Ascending aorta (tissue), 2 donors: ENCODE measurements at regions of chr6 and their contacts with region 1.

Region 1: GRCh38 chr6:41787219-41787917 is at the start of gene TOMM6:
- DNase-seq: peak; percentile 73 to 97
- H3K4me3 ChIP-seq: peak within 1 kb of the TSS; percentile 75 to 79
- H3K27ac ChIP-seq: peak within 1 kb of the TSS; percentile 87 to 92
- H3K4me1 ChIP-seq: peaks cover 12 to 13% of the 10 kb centered on the region in 2 donors
- H3K27me3 ChIP-seq: no peaks in the 10 kb centered on the region
- CTCF ChIP-seq: peak; percentile 86 to 91 (median 86)
- total RNA-seq, gene TOMM6: 79.9 TPM

Region 2: GRCh38 chr6:41424370-41425058 is 362.9 kb before region 1 on chr6:
- intact Hi-C with region 1: loop called (anchors 2 kb)
- DNase-seq: peak; percentile 47 to 93
- H3K4me3 ChIP-seq: no peak overlapping the region
- H3K27ac ChIP-seq: no peak overlapping the region
- H3K4me1 ChIP-seq: peaks cover 4 to 27% of the 10 kb centered on the region in 2 donors
- H3K27me3 ChIP-seq: no peaks in the 10 kb centered on the region
- CTCF ChIP-seq: peak; percentile 66 to 91 (median 85)

Region 3: DNA sequence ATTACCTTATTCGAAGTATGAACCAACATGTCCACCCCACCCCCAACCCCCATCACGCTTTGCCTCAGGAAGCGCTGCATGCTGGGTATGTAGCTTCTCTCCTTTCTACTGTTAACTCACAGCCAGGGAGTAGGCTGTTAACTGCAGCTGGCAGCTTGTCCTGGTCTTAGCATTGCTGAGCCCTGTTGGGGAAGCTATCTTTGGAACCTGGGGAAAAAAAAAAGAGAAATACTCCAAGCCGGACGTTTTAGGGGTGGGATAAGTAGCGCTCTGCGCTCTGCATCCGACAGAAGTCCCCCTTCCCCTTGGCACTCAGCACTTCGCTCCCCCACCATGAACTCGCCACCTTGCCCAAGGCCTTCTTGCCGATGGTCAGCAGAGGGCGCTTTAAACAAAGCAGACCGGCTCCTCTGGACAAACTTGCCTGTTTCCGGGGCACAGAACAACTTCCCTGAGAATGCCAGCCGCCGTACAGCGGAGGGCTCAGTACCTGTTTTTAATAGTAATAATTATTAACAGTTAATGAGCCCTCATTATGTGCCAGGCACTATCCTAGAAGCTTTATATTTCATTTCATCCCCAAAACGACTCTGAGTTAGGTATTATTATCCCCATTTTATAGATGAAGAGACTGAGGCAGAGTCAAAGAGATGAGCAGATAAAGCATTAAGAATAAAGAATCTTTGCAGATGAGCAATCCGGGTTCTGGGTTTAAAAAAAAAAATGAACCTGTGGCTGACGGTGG is 184.3 kb before region 1 on chr6:
- intact Hi-C with region 1: loop called (anchors 2 kb)
- DNase-seq: peak in 1 of 2 donors; percentile 84
- H3K4me3 ChIP-seq: peak overlapping the region; percentile 23 to 27
- H3K27ac ChIP-seq: no peak overlapping the region
- H3K4me1 ChIP-seq: peaks cover 0 to 3% of the 10 kb centered on the region in 2 donors
- H3K27me3 ChIP-seq: no peaks in the 10 kb centered on the region
- CTCF ChIP-seq: peak; percentile 75 to 92 (median 90)

Region 4: GRCh38 chr6:41735427-41736356 is 51.7 kb before region 1 on chr6 and contains the start of gene TFEB:
- intact Hi-C with region 1: loop called (anchors 1 kb)
- DNase-seq: peak; percentile 77 to 97
- H3K4me3 ChIP-seq: peak within 1 kb of the TSS; percentile 92 to 93
- H3K27ac ChIP-seq: peak within 1 kb of the TSS; percentile 90 to 99
- H3K4me1 ChIP-seq: peaks cover 0 to 26% of the 10 kb centered on the region in 2 donors
- H3K27me3 ChIP-seq: no peaks in the 10 kb centered on the region
- CTCF ChIP-seq: peak; percentile 86 to 99 (median 86)
- total RNA-seq, gene TFEB: 18.6 TPM

Region 5: DNA sequence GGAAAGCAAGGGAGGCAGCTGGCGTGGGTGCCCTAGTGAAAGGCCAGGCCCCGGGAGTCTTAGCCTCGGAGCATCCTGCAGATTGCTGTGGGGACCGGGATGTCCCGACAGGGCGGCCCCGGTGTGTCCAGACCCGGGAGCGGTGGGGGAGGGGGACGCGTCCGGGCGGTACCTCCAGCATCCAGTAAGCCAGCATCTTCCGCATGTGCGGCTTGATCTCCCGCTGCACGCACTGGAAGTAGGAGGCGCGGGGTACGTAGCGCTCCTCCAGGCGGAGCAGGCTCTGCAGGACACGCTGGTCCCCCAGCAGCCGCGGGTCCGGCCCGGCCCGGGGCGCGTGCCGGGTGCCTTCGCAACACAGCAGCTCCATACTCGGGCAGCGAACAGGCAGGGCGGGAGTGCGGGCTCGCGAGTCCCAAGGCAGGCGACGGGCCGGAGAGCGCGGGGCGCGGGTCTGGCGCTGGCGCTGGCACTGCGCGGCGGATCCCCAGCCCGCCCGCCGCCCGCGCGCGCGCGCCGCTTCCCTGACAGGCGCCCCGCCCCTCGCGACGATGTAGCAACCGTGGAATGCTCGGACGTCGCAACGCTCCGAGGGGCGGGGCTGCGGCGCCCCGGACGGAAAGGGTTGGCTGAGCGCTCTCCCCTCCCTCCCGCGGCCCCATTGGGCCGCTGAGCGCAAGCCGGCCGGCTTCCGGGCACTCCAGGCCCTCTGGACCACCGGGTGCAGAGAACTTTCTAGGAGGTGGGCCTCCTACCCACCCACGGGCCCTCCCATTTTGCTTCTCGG is 154.1 kb after region 1 on chr6 and contains the start of gene CCND3:
- intact Hi-C with region 1: loop called (anchors 2 kb)
- DNase-seq: peak; percentile 57 to 95
- H3K4me3 ChIP-seq: peak within 1 kb of the TSS; percentile 84 to 93
- H3K27ac ChIP-seq: peak within 1 kb of the TSS; percentile 72 to 83
- H3K4me1 ChIP-seq: peaks cover 4 to 20% of the 10 kb centered on the region in 2 donors
- H3K27me3 ChIP-seq: no peaks in the 10 kb centered on the region
- CTCF ChIP-seq: peak in 1 of 3 experiments; percentile 1
- total RNA-seq, gene CCND3: 130 TPM

Region 6: DNA sequence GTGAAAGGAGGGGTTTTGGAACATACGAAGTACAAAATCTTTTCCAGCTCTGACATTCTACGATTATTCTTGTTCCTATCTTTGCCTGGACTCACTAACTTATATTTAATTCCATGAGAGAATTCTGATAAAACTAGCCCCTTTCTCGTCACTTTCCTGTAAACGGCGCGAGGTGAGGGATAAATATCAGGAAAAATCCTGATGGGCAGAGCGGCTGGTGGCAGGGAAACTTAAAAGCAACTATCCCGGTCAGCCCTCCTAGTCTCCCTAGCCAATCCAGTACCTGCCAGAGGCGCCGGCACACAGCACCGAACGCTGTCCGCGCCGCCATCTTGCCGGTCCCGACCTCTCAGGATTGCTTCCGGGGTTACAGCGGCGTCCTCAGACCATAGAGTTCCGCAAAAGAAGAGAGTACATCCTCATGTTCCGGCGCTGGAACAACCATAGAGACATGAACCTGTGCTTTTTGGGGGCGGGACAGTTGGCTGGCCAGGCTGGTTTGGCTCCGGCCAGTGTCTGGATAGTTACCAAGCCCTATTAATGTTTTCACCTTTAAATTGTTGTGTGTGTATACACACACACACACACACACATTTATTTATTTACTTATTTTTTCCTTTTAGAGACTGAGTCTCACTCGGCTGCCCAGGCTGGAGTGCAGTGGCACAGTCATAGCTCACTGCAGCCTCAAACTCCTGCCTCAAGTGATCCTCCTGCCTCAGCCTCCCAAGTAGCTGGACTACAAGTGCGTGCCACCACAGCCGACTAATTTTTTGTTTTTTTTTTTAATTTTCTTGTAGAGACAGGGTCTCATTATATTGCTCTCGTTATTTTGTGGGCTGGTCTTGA is 430.4 kb after region 1 on chr6 and contains the start of gene MRPS10:
- intact Hi-C with region 1: loop called (anchors 2 kb)
- DNase-seq: peak; percentile 66 to 96
- H3K4me3 ChIP-seq: peak within 1 kb of the TSS; percentile 59 to 80
- H3K27ac ChIP-seq: peak within 1 kb of the TSS; percentile 61 to 72
- H3K4me1 ChIP-seq: peaks cover 3 to 4% of the 10 kb centered on the region in 2 donors
- H3K27me3 ChIP-seq: no peaks in the 10 kb centered on the region
- CTCF ChIP-seq: no peak
- total RNA-seq, gene MRPS10: 5.4 TPM

Region 7: GRCh38 chr6:43629505-43630300 is 1842.3 kb after region 1 on chr6:
- intact Hi-C with region 1: loop called (anchors 10 kb)
- DNase-seq: peak; percentile 86 to 98
- H3K4me3 ChIP-seq: peak overlapping the region; percentile 97 to 99
- H3K27ac ChIP-seq: peak overlapping the region; percentile 97 to 98
- H3K4me1 ChIP-seq: peaks cover 5 to 19% of the 10 kb centered on the region in 2 donors
- H3K27me3 ChIP-seq: no peaks in the 10 kb centered on the region
- CTCF ChIP-seq: no peak